ENCODE measurements at regions of chr14 and their contacts with region 1.

Region 1: DNA sequence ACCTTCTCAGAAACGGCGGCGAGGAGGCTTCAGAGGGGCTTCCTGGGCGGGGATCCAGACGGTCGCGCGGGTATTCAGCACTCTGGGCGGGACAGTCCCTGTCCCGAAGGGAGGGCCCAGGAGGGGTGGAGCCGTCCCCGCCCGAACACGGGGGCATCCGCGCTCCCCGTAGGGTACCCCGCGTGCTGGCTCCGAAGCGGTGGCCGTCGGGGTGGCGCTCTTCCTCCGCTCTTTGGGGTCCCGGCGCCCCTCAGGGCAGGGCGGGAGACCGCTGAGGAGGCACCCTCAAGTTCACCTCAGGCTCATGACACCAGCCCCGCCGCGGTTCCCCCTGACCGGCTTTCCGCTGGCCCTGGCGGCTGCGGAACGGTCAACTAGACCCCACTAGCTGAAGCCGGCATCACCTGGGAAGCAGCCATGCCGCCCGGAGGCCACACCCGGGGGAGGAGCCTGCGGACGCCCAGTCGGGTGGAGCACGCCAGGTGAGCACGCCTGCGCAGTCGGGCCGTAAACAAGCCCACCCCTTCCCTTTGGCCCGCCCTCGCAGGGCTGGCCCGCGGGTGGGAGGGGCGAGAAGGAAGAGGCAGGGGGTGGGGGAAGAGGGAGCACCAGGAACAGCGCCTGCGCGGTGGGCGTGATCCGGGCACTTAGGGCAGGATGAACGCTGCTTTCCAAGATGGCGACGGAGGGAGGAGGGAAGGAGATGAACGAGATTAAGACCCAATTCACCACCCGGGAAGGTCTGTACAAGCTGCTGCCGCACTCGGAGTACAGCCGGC is at the start of gene WDR20:
- DNase-seq: peak; percentile 80
- ATAC-seq: peak; percentile 96
- H3K4me3 ChIP-seq: peak within 1 kb of the TSS; percentile 84 to 95
- H3K27ac ChIP-seq: peak within 1 kb of the TSS; percentile 89
- H3K4me1 ChIP-seq: peaks cover 8% of the 10 kb centered on the region; the same call in 1 of the 2 replicates
- H3K27me3 ChIP-seq: no peaks in the 10 kb centered on the region
- CTCF ChIP-seq: no peak; the same call in 1 of the 2 replicates
- total RNA-seq, gene WDR20: 20.2 TPM

Region 2: DNA sequence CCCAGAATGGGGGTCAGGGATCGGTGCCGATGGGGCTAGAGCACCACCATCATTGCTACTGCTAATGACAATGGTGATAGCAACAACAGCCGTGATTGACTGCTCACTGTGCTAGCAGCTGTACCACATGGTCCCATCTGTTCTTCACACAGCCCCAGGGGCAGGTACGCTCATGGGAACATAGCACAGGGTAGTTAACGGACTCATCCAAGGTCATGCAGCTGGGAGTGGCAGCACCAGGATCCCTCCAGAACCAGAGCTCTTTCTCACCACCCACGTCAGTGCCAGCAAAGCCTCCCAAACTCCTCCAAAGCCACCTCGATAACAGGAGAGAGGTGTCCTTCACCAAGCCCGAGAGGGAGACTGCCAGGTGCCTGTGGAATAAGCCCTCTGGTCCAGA is 186.3 kb before region 1 on chr14:
- CTCF ChIA-PET with region 1: no interaction called
- POLR2A ChIA-PET with region 1: interaction called, 18 read pairs
- in situ Hi-C with region 1: no loop called
- intact Hi-C with region 1: no loop called
- DNase-seq: no peak
- ATAC-seq: no peak; the same call in 1 of the 2 replicates
- H3K4me3 ChIP-seq: no peak overlapping the region
- H3K27ac ChIP-seq: no peak overlapping the region
- H3K4me1 ChIP-seq: peaks cover 3% of the 10 kb centered on the region
- H3K27me3 ChIP-seq: no peaks in the 10 kb centered on the region
- CTCF ChIP-seq: no peak

Region 3: GRCh38 chr14:102125546-102125945 is 13.9 kb before region 1 on chr14:
- CTCF ChIA-PET with region 1: no interaction called
- POLR2A ChIA-PET with region 1: interaction called, 11 read pairs
- in situ Hi-C with region 1: no loop called
- intact Hi-C with region 1: no loop called
- DNase-seq: no peak
- ATAC-seq: peak; percentile 63
- H3K4me3 ChIP-seq: no peak overlapping the region
- H3K27ac ChIP-seq: no peak overlapping the region
- H3K4me1 ChIP-seq: peaks cover 7% of the 10 kb centered on the region
- H3K27me3 ChIP-seq: no peaks in the 10 kb centered on the region
- CTCF ChIP-seq: no peak